K562 (cell line): ENCODE measurements at regions of chr12 and their contacts with region 1.

Region 1: GRCh38 chr12:76031537-76032073 is at the start of gene PHLDA1:
- DNase-seq: peak; percentile 84 to 93 (median 87)
- ATAC-seq: peak; percentile 91
- H3K4me3 ChIP-seq: peak within 1 kb of the TSS; percentile 54
- H3K27ac ChIP-seq: peak within 1 kb of the TSS; percentile 76
- H3K4me1 ChIP-seq: peaks cover 29 to 37% of the 10 kb centered on the region in 2 experiments; a peak in 4 of 5 replicates
- H3K27me3 ChIP-seq: peaks cover 0 to 8% of the 10 kb centered on the region in 2 experiments; a peak in 1 of 5 replicates
- CTCF ChIP-seq: peak; percentile 65 to 98 (median 91)
- EP300 ChIP-seq: no peak
- POLR2A ChIP-seq: peak; percentile 76
- RAD21 ChIP-seq: peak; percentile 94 to 99
- polyA plus RNA-seq, gene PHLDA1: 0.15 to 0.56 TPM

Region 2: DNA sequence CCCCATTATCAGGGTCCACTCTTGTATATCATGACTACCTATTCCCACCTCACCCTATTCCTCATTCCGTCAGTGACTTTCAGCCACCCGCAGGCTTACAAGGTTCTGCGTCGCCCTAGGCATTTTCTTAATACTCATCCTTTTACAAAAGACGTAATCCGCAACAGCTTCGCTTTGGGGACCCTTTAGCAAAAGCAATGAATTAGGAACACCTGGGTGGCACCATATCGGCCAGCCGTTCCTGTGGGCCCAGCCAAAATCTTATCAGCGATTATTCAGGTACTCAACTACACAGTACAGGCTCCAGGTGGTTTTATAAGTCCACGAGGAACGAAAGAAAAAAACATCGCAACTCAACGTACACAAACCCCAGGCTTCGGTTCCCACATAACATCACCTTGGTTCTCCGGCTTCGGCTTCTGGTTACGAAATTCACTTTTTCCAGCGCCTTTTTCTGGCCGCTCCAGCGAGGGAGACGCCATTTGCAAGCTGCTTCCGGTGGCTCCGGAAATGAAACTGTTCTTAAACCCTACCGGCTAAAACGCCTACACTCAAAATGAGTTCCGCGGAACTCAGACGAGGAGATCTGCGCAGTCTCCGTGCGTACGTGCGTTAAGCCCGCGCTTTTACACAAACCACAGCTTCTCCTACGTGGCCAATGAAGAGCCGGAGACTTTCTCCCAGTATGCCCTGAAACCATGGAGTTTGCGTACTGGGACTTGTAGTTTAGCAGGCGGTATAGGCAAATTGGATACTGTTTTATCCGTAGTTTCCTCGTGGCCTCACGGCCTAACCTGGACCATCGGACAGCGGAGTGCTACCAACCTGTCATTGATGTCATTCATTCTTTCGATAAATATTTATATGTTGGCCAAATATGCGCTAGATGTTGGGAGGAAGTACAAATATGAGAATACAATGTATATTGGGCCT is 520.2 kb before region 1 on chr12 and contains the start of gene KRR1:
- CTCF ChIA-PET with region 1: no interaction called
- POLR2A ChIA-PET with region 1: interaction called, 3 read pairs
- in situ Hi-C with region 1: loop called (anchors 5 kb)
- intact Hi-C with region 1: no loop called
- DNase-seq: peak; percentile 78 to 97 (median 82)
- ATAC-seq: peak; percentile 99
- H3K4me3 ChIP-seq: peak within 1 kb of the TSS; percentile 84
- H3K27ac ChIP-seq: peak within 1 kb of the TSS; percentile 85
- H3K4me1 ChIP-seq: peaks cover 0 to 9% of the 10 kb centered on the region in 2 experiments; a peak in 1 of 5 replicates
- H3K27me3 ChIP-seq: no peaks in the 10 kb centered on the region
- CTCF ChIP-seq: peak in 1 of 3 experiments; percentile 2; a peak in 1 of 6 replicates
- EP300 ChIP-seq: peak; percentile 42; the same call in 1 of the 2 replicates
- POLR2A ChIP-seq: peak; percentile 91
- RAD21 ChIP-seq: 0 out of 4 replicates have a peak, but pooled peaks of 1 of the 2 experiments have one; percentile 11
- polyA plus RNA-seq, gene KRR1: 49.9 to 68.5 TPM

Region 3: DNA sequence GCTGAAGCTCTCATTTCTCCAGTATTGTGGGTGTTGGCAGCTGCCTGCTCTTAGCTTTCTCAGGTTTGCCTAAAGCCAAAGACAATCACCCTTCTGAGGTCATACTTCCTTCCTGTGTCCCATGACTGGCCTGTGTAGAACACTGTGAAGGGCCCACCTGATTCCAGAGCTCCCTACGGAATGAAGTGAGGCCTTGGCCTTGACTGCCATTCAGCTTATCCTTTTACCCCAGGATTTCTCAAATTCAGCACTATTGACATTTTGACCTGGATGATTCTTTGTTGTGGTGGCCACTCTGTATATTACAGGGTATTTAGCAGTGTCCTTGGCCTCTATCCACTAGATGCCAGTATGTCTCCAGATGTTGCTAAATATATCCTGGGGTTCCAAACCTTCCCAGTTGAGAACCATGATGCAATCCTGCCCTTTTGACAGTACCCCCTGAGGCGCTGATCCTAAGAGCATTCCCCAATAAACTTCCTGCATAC is 407.9 kb before region 1 on chr12:
- CTCF ChIA-PET with region 1: no interaction called
- POLR2A ChIA-PET with region 1: no interaction called
- in situ Hi-C with region 1: no loop called
- intact Hi-C with region 1: loop called (anchors 5 kb)
- DNase-seq: peak in 1 of 4 experiments; percentile 24
- ATAC-seq: peak; percentile 84
- H3K4me3 ChIP-seq: no peak overlapping the region
- H3K27ac ChIP-seq: no peak overlapping the region
- H3K4me1 ChIP-seq: no peaks in the 10 kb centered on the region
- H3K27me3 ChIP-seq: no peaks in the 10 kb centered on the region
- CTCF ChIP-seq: peak; percentile 27 to 59 (median 57); a peak in 4 of 6 replicates
- EP300 ChIP-seq: no peak
- POLR2A ChIP-seq: no peak
- RAD21 ChIP-seq: peak; percentile 64 to 72

Region 4: DNA sequence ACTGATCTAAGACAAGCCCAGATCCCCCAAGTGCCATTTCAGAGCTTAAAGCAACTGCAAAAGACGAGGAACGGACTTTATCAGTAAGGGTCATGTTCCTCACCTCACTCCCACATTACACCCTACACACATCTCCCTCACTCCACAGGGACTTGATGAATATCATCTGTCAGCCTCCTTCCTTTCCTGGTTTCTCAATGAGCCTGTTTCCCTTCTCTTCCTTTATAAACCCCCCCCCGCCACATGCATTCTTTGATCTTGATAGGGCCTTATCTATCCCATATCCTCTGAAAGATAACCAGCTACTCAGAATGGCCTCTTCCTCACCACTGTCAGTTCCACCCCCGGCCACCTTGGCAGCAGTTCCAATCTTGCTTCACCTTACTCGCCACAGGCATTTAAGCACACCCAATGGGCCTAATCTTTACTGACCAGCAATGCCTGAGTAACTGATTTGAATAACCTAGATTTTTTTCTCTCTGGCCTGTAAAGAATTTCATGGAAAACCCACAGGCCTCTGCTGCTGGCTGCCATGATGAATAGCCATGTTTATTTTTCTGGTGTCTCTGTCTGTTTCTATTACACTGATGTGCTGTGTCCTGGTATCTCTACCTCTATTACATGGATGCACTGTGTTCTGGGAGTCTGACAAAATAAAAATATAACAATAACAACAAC is 138.7 kb before region 1 on chr12:
- CTCF ChIA-PET with region 1: no interaction called
- POLR2A ChIA-PET with region 1: no interaction called
- in situ Hi-C with region 1: no loop called
- intact Hi-C with region 1: loop called (anchors 5 kb)
- DNase-seq: peak; percentile 68 to 94 (median 80)
- ATAC-seq: peak; percentile 98
- H3K4me3 ChIP-seq: no peak overlapping the region
- H3K27ac ChIP-seq: no peak overlapping the region; the same call in 2 of the 3 replicates
- H3K4me1 ChIP-seq: peaks cover 0 to 22% of the 10 kb centered on the region in 2 experiments; a peak in 4 of 5 replicates
- H3K27me3 ChIP-seq: no peaks in the 10 kb centered on the region; a peak in 1 of 5 replicates
- CTCF ChIP-seq: peak in 1 of 3 experiments; percentile 10; a peak in 1 of 6 replicates
- EP300 ChIP-seq: peak; percentile 95
- POLR2A ChIP-seq: no peak
- RAD21 ChIP-seq: peak; percentile 26 to 46; a peak in 3 of 4 replicates

Region 5: GRCh38 chr12:76348079-76348901 is 316.7 kb after region 1 on chr12 and contains the start of gene BBS10:
- CTCF ChIA-PET with region 1: no interaction called
- POLR2A ChIA-PET with region 1: no interaction called
- in situ Hi-C with region 1: no loop called
- intact Hi-C with region 1: loop called (anchors 2 kb)
- DNase-seq: peak; percentile 66 to 92 (median 78)
- ATAC-seq: peak; percentile 98
- H3K4me3 ChIP-seq: peak within 1 kb of the TSS; percentile 55
- H3K27ac ChIP-seq: peak within 1 kb of the TSS; percentile 78
- H3K4me1 ChIP-seq: peaks cover 8 to 13% of the 10 kb centered on the region in 2 experiments; a peak in 4 of 5 replicates
- H3K27me3 ChIP-seq: no peaks in the 10 kb centered on the region
- CTCF ChIP-seq: peak; percentile 41 to 62 (median 43)
- EP300 ChIP-seq: no peak
- POLR2A ChIP-seq: peak; percentile 88
- RAD21 ChIP-seq: peak in 1 of 2 experiments; percentile 41; a peak in 3 of 4 replicates
- polyA plus RNA-seq, gene BBS10: 2.3 to 2.7 TPM